A549 (cell line): ENCODE measurements at regions of chrX and their contacts with region 1.

Region 1: GRCh38 chrX:68196939-68197791 is 236.1 kb downstream of the OPHN1 start:
- DNase-seq: peak; percentile 40 to 71
- ATAC-seq: peak; percentile 88 to 90
- H3K4me3 ChIP-seq: no peak overlapping the region
- H3K27ac ChIP-seq: no peak overlapping the region
- H3K4me1 ChIP-seq: no peaks in the 10 kb centered on the region
- CTCF ChIP-seq: peak; percentile 82
- EP300 ChIP-seq: no peak
- POLR2A ChIP-seq: no peak
- RAD21 ChIP-seq: peak; percentile 87 to 95

Region 2: GRCh38 chrX:68163441-68163840 is 33.7 kb before region 1 on chrX:
- CTCF ChIA-PET with region 1: no interaction called
- POLR2A ChIA-PET with region 1: no interaction called
- DNase-seq: no peak
- ATAC-seq: no peak
- H3K4me3 ChIP-seq: no peak overlapping the region
- H3K27ac ChIP-seq: no peak overlapping the region
- H3K4me1 ChIP-seq: no peaks in the 10 kb centered on the region
- CTCF ChIP-seq: no peak
- EP300 ChIP-seq: no peak
- POLR2A ChIP-seq: no peak
- RAD21 ChIP-seq: no peak

Region 3: GRCh38 chrX:68183612-68184214 is 13.5 kb before region 1 on chrX:
- CTCF ChIA-PET with region 1: interaction called, 30 read pairs
- POLR2A ChIA-PET with region 1: no interaction called
- DNase-seq: peak; percentile 12 to 62
- ATAC-seq: peak in 1 of 2 experiments; percentile 74; a peak in 3 of 6 replicates
- H3K4me3 ChIP-seq: no peak overlapping the region
- H3K27ac ChIP-seq: no peak overlapping the region
- H3K4me1 ChIP-seq: peaks cover 14% of the 10 kb centered on the region; the same call in 2 of the 3 replicates
- CTCF ChIP-seq: peak; percentile 56
- EP300 ChIP-seq: no peak
- POLR2A ChIP-seq: no peak
- RAD21 ChIP-seq: peak; percentile 61 to 75

Region 4: GRCh38 chrX:68462653-68463052 is 265.5 kb after region 1 on chrX:
- CTCF ChIA-PET with region 1: interaction called, 10 read pairs
- POLR2A ChIA-PET with region 1: no interaction called
- DNase-seq: peak in 1 of 2 experiments; percentile 48
- ATAC-seq: peak in 1 of 2 experiments; percentile 62; a peak in 3 of 6 replicates
- H3K4me3 ChIP-seq: no peak overlapping the region
- H3K27ac ChIP-seq: no peak overlapping the region
- H3K4me1 ChIP-seq: 0 out of 3 replicates have a peak, but pooled peaks cover 2% of the 10 kb centered on the region
- CTCF ChIP-seq: peak; percentile 31
- EP300 ChIP-seq: no peak
- POLR2A ChIP-seq: no peak
- RAD21 ChIP-seq: peak; percentile 41 to 47

Region 5: DNA sequence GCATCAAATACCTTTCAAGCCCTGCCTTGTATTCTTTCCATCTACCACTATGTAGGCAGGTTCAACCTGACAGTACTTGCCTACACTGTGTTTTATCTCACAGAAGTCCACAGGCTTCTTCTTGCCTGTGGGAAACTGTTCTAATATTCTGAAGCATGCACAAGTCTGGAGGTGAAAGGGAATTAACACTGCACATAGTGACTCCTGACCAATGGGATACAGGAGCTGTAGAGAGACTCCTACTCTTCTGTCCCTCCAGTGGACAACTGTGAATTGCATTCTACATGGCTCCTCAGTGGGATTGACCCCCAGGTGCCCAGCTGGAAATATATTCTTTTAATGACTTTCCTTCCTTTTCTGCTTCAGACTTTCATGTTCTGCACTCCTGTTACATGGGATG is 293.4 kb after region 1 on chrX:
- CTCF ChIA-PET with region 1: interaction called, 26 read pairs
- POLR2A ChIA-PET with region 1: no interaction called
- DNase-seq: peak; percentile 69 to 74
- ATAC-seq: peak; percentile 96 to 98
- H3K4me3 ChIP-seq: no peak overlapping the region
- H3K27ac ChIP-seq: peak overlapping the region; percentile 70 to 83
- H3K4me1 ChIP-seq: peaks cover 34% of the 10 kb centered on the region
- CTCF ChIP-seq: peak; percentile 42
- EP300 ChIP-seq: no peak
- POLR2A ChIP-seq: no peak
- RAD21 ChIP-seq: peak; percentile 24 to 49; a peak in 3 of 5 replicates

Region 6: DNA sequence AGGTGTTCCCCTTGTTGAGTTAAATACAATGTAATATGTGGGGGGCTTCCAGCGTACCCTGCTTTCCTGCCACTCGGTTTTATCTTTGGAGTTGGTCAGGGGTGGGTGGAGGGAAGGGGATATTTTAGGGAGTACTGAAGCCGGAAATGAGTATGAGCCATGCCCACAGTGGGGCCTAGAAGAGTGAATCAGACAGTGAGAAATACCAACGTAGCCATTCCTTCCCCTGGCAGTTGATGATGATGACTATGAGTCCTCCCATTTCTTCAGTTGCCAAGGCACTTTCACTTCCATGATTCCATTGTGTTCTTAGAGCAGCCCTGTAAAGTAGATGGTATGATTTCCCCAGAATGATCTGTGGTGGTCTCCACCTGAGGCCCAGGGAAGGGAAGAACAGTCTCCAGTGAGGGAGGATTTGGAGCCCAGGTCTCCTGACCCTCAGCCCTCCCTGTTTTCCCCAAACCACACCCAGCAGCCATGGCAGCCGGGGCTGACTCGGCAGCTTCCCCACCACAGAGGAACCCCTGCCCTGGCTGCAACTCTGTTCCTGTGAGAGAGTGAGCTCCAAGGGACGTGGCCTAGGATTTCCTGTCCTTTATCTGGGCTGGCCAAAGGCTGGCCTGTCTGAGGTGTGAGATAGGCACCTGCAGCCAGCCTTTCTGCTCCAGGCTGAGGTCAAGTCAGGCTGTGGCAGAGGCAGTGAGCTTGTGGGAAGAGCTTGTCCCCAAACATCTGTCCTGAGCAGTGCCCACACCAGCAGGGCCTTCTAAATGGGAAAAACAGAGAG is 503.0 kb after region 1 on chrX:
- CTCF ChIA-PET with region 1: interaction called, 12 read pairs
- POLR2A ChIA-PET with region 1: no interaction called
- DNase-seq: no peak
- ATAC-seq: no peak
- H3K4me3 ChIP-seq: no peak overlapping the region
- H3K27ac ChIP-seq: no peak overlapping the region
- H3K4me1 ChIP-seq: peaks cover 12% of the 10 kb centered on the region
- CTCF ChIP-seq: no peak
- EP300 ChIP-seq: no peak
- POLR2A ChIP-seq: no peak
- RAD21 ChIP-seq: no peak

Region 7: GRCh38 chrX:68710870-68711576 is 513.9 kb after region 1 on chrX:
- CTCF ChIA-PET with region 1: interaction called, 61 read pairs
- POLR2A ChIA-PET with region 1: no interaction called
- DNase-seq: peak; percentile 65 to 73
- ATAC-seq: peak; percentile 91 to 94
- H3K4me3 ChIP-seq: no peak overlapping the region
- H3K27ac ChIP-seq: peak overlapping the region in 1 of 2 experiments; percentile 25; a peak in 1 of 6 replicates
- H3K4me1 ChIP-seq: no peaks in the 10 kb centered on the region
- CTCF ChIP-seq: peak; percentile 54
- EP300 ChIP-seq: no peak
- POLR2A ChIP-seq: no peak
- RAD21 ChIP-seq: peak; percentile 88

Region 8: GRCh38 chrX:68807818-68808217 is 610.7 kb after region 1 on chrX:
- CTCF ChIA-PET with region 1: interaction called, 10 read pairs
- POLR2A ChIA-PET with region 1: no interaction called
- DNase-seq: peak; percentile 10 to 48
- ATAC-seq: peak; percentile 70 to 82; a peak in 4 of 6 replicates
- H3K4me3 ChIP-seq: no peak overlapping the region
- H3K27ac ChIP-seq: no peak overlapping the region
- H3K4me1 ChIP-seq: no peaks in the 10 kb centered on the region
- CTCF ChIP-seq: peak; percentile 39
- EP300 ChIP-seq: no peak
- POLR2A ChIP-seq: no peak
- RAD21 ChIP-seq: peak; percentile 38 to 49; a peak in 3 of 5 replicates